ENCODE measurements at regions of chr22 and their contacts with region 1.

Region 1: GRCh38 chr22:43993027-43993760 is 30.9 kb upstream of the PARVB start:
- DNase-seq: peak; percentile 53
- ATAC-seq: peak; percentile 74
- H3K4me3 Mint-ChIP-seq: peak overlapping the region; percentile 39
- H3K27ac Mint-ChIP-seq: peak overlapping the region; percentile 59
- H3K4me1 Mint-ChIP-seq: peaks cover 46% of the 10 kb centered on the region
- H3K27me3 Mint-ChIP-seq: no peaks in the 10 kb centered on the region
- CTCF ChIP-seq: peak; percentile 66

Region 2: DNA sequence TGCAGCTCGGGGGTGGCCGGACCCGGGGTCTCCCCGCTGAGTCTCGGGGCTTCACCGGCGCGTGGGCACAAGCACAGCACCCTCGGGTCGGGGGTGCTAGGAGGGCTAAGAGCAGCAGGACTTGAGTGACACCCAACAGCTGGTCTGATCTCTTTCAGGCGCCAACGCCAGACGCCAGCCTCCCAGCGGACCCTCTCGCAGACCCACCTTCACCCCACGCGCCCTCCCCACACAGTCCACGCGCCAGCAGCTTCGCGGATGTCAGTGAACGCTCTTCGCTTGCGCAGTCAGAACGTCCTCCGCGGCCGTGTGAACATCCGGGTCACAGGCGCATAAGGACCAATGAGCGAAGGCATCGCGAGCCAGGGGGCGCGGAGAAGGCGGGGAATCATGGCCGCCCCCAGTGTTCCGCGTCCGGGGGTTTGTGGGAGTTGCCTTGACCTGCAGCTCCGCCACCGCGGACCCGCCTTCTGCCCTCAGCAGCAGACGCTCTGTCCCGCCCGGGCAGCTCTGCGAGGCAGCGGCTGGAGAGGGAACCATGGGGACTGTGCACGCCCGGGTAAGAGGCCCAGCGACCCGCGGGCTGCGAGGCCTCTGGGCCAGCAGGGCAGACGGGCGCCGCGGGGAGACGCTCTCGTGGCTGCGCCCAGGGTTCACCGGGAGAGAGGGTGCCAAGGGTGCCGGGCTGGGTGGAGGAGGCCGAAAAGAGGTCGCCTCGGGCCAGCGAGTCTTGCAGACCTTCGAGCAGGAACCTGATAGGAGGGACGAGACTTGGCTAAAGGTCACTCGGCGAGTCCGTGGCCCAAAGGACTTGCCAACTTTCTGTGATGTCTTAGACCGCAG is 37.9 kb before region 1 on chr22 and contains the start of gene SAMM50:
- CTCF ChIA-PET with region 1: interaction called, 5 read pairs
- POLR2A ChIA-PET with region 1: interaction called, 5 read pairs
- intact Hi-C with region 1: loop called (anchors 2 kb)
- DNase-seq: peak; percentile 86
- ATAC-seq: peak; percentile 95
- H3K4me3 Mint-ChIP-seq: peak within 1 kb of the TSS; percentile 96
- H3K27ac Mint-ChIP-seq: peak within 1 kb of the TSS; percentile 94
- H3K4me1 Mint-ChIP-seq: peaks cover 33% of the 10 kb centered on the region
- H3K27me3 Mint-ChIP-seq: peaks cover 3% of the 10 kb centered on the region
- CTCF ChIP-seq: no peak
- total RNA-seq, gene SAMM50: 49.6 and 51.2 TPM in 2 replicates

Region 3: DNA sequence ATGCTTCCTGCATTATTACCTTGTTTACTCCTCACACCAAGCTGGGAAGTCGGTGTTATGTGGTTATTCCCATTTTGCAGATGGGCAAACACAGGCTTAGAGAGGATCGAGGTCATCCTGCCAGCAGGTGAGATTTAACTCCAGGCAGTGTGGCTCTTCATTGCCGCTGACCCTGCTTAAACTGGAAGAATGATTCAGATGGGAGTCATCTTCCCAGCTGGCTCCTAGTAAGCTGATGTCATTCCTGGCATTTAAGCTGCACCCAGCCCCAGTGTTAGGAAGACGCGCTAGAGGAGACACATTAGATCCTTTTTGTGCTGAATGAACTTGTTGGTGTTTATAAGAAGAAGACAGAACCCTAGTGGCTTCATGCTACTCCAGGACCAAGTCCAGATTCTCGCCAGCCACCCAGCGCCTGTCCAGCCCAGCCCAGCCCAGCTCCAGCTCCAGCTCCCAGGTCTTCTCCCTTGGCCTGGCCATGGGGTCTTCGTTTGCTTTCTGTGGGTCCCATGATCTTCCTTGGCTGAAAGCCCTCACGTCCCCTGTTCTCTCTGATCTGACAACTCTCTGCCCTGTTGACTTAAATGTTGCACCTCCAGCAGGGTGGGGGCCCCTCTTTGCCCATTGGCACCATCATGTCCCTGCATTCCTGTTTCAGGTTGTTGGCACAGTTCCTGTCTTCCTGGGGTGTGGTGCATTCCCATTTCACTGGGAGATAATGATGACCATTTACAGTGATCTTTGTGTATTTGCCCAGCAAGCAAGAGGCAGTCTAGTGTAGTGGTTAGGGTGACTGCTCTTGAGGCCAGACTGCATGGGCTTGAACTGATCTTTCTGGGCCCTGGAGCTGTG is 44.6 kb after region 1 on chr22:
- CTCF ChIA-PET with region 1: interaction called, 14 read pairs
- POLR2A ChIA-PET with region 1: interaction called, 3 read pairs
- intact Hi-C with region 1: loop called (anchors 1 kb)
- DNase-seq: no peak
- ATAC-seq: no peak
- H3K4me3 Mint-ChIP-seq: no peak overlapping the region
- H3K27ac Mint-ChIP-seq: no peak overlapping the region
- H3K4me1 Mint-ChIP-seq: peaks cover 17% of the 10 kb centered on the region
- H3K27me3 Mint-ChIP-seq: no peaks in the 10 kb centered on the region
- CTCF ChIP-seq: no peak

Region 4: GRCh38 chr22:44080936-44081861 is 88.0 kb after region 1 on chr22:
- CTCF ChIA-PET with region 1: interaction called, 537 read pairs
- POLR2A ChIA-PET with region 1: interaction called, 43 read pairs
- intact Hi-C with region 1: loop called (anchors 1 kb)
- DNase-seq: peak; percentile 55
- ATAC-seq: peak; percentile 49
- H3K4me3 Mint-ChIP-seq: no peak overlapping the region
- H3K27ac Mint-ChIP-seq: no peak overlapping the region
- H3K4me1 Mint-ChIP-seq: peaks cover 4% of the 10 kb centered on the region
- H3K27me3 Mint-ChIP-seq: no peaks in the 10 kb centered on the region
- CTCF ChIP-seq: peak; percentile 19

Region 5: DNA sequence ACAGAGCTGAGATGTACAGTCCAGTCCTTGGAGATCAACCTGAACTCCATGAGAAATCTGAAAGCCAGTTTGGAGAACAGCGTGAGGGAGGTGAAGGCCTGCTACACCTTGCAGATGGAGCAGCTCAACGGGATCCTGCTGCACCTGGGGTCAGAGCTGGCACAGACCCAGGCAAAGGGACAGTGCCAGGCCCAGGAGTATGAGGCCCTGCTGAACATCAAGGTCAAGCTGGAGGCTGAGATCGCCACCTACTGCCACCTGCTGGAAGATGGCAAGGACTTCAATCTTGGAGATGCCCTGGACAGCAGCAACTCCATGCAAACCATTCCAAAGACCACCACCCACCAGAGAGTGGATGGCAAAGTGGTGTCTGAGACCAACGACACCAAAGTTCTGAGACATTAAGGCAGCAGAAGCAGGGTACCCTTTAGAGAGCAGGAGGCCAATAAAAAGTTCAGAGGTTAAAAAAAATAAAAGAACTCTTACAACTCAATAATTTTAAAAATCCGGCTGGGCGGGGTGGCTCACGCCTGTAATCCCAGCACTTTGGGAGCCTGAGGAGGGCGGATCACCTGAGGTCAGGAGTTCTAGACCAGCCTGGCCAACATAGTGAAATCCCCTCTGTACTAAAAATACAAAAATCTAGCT is 574.8 kb after region 1 on chr22:
- CTCF ChIA-PET with region 1: interaction called, 18 read pairs
- POLR2A ChIA-PET with region 1: interaction called, 3 read pairs
- intact Hi-C with region 1: loop called (anchors 1 kb)
- DNase-seq: no peak
- ATAC-seq: no peak
- H3K4me3 Mint-ChIP-seq: no peak overlapping the region
- H3K27ac Mint-ChIP-seq: no peak overlapping the region
- H3K4me1 Mint-ChIP-seq: no peaks in the 10 kb centered on the region
- H3K27me3 Mint-ChIP-seq: peaks cover 16% of the 10 kb centered on the region
- CTCF ChIP-seq: no peak